Heart left ventricle (tissue), 16 donors: ENCODE measurements at regions of chr12 and their contacts with region 1.

Region 1: GRCh38 chr12:112066566-112066965 is 42.0 kb downstream of the NAA25 start:
- DNase-seq: no peak
- ATAC-seq: no peak
- H3K4me3 ChIP-seq: no peak overlapping the region
- H3K27ac ChIP-seq: peak overlapping the region in 1 of 12 donors; percentile 6
- H3K4me1 ChIP-seq: peaks cover 0 to 9% (median 0%) of the 10 kb centered on the region in 12 donors
- H3K27me3 ChIP-seq: no peaks in the 10 kb centered on the region
- CTCF ChIP-seq: no peak
- POLR2A ChIP-seq: no peak

Region 2: DNA sequence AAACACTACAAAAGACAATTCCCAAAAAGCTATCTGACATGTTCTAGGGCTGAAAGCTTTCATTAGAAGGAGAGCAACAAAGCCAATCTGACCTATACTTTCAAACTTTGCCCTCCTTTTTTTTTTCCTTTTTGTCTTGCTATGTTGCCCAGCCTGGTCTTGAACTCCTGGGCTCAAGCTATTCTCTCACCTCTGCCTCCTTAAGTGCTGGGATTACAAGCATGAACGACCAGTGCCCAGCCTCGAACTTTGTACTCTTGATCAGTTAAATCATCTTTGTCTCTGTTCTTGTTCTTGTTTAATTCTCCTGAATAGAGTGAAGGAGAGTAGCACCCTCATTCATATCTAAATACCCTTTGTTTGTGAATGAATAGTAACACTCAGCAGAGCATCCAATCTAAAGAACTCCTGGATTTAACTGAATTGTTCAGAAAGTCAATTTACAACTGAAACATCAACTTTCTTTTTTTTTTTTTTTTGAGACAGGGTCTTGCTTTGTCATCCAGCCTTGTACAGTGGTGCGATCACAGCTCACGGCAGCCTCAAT is 31.3 kb before region 1 on chr12:
- intact Hi-C with region 1: loop called in 1 of 10 experiments (anchors 5 kb)
- DNase-seq: no peak
- ATAC-seq: no peak
- H3K4me3 ChIP-seq: no peak overlapping the region
- H3K27ac ChIP-seq: no peak overlapping the region
- H3K4me1 ChIP-seq: no peaks in the 10 kb centered on the region
- H3K27me3 ChIP-seq: no peaks in the 10 kb centered on the region
- CTCF ChIP-seq: no peak
- POLR2A ChIP-seq: no peak